ENCODE measurements at regions of chr6 and their contacts with region 1.

Region 1: DNA sequence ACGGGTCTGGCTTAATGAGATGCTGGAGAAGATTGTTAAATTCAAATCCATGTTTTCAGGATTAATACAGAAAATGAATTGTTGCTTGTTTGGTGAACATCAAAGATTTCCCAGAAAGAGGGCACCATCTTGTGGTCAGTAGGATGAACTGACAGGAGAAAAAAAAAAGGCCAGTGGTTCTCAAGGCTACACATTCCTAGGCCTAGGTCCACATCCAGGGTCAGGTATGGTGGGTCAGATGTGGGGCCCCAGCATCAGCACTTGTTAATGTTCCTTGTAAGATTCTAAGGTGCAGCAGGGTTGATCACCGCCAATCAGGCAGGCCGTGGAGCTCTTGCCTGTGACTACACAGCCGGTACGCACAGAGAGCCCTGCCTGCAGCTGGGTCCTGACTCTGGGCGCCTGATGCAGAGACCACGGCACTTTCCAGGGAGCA is 34.0 kb upstream of the FOXO3 start:
- DNase-seq: peak; percentile 6 to 40 (median 33)
- H3K4me3 ChIP-seq: no peak overlapping the region
- H3K4me3 Mint-ChIP-seq: no peak overlapping the region
- H3K27ac ChIP-seq: no peak overlapping the region
- H3K27ac Mint-ChIP-seq: no peak overlapping the region
- H3K4me1 ChIP-seq: no peaks in the 10 kb centered on the region
- H3K4me1 Mint-ChIP-seq: peaks cover 4% of the 10 kb centered on the region
- H3K27me3 ChIP-seq: no peaks in the 10 kb centered on the region
- H3K27me3 Mint-ChIP-seq: peaks cover 0 to 2% (median 0%) of the 10 kb centered on the region in 3 donors
- CTCF ChIP-seq: peak; percentile 75

Region 2: DNA sequence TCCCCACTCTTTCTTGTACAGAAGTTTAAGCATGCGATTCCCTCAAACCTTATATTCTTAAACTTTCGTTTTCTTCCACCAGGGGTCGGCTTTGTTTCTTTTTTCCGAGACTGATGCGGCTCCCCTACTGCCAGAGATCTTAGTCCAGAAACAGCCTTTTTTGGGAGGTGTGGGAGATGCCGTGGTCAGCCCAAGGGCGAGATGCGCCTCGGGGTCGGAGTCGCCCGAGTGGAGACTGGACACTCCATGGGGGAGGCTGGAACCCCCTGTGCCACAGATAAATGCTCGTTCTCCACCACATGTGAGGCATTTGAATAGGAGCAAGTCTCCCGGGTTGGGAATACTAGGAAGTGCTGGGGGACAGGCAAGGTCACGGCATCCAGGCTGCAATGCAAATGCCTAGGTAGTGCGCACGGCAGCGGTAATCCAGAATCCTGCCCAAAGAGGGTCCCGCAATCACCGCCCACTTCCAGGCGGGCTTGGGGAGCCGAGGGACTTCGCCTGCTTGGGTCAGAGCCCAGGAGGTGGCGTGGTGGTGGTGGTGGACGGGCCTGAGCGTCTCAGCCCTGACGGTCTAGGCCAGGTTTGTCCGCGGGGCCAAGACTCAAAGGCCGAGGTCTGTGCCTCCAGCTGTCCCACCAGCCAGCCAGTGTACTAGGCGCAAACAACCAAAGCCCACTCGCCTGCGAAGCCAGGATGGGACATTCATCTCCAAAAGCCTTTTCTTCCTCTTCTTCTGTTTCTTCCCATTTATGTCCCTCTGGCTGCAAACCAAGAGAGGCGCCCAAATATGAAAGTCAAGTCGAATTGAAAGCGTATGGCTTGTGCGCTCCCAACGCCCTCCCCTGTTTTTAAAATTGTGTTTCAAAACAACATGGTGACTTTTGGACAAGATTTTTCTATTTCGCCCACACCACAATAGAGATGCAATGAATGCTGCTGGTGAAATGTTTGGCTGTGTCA is 412.9 kb before region 1 on chr6:
- intact Hi-C with region 1: loop called (anchors 5 to 10 kb)
- DNase-seq: no peak
- H3K4me3 ChIP-seq: peak overlapping the region in 1 of 3 experiments; percentile 76
- H3K4me3 Mint-ChIP-seq: peak overlapping the region; percentile 80 to 99
- H3K27ac ChIP-seq: no peak overlapping the region
- H3K27ac Mint-ChIP-seq: peak overlapping the region in 1 of 7 donors; percentile 3
- H3K4me1 ChIP-seq: peaks cover 41 to 50% of the 10 kb centered on the region in 2 donors
- H3K4me1 Mint-ChIP-seq: peaks cover 49% of the 10 kb centered on the region
- H3K27me3 ChIP-seq: peaks cover 69 to 92% of the 10 kb centered on the region in 2 donors
- H3K27me3 Mint-ChIP-seq: peaks cover 85 to 92% (median 86%) of the 10 kb centered on the region in 3 donors
- CTCF ChIP-seq: peak; percentile 43

Region 3: DNA sequence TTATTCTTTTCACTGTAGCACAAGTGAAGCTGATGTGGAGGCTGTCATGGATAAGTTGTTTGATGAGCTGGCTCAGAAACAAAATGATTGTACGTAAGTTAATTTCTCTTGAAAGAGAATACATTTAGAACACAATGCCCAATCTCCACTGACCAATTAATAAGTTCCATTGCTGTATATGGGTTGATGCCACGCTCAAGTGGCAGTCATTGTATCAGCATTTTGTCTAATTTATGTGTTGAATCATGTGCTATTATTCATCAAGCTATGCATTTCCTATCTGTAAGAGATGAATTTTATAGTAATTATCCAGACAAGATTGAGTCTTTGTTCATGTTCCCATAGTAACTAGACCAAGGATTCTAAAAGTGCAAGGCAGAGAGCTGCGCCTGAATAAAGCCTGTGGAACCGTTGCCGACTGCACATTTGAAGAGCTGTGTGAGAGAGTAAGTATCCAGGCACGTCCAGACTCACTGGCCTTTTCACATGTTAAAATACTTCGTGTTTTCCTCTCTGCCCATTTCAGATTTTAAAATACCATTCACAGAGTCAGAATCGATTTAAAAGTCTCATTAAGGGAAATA is 49.8 kb before region 1 on chr6:
- intact Hi-C with region 1: no loop called
- DNase-seq: no peak
- H3K4me3 ChIP-seq: no peak overlapping the region
- H3K4me3 Mint-ChIP-seq: no peak overlapping the region
- H3K27ac ChIP-seq: no peak overlapping the region
- H3K27ac Mint-ChIP-seq: no peak overlapping the region
- H3K4me1 ChIP-seq: no peaks in the 10 kb centered on the region
- H3K4me1 Mint-ChIP-seq: no peaks in the 10 kb centered on the region
- H3K27me3 ChIP-seq: no peaks in the 10 kb centered on the region
- H3K27me3 Mint-ChIP-seq: peaks cover 0 to 3% (median 0%) of the 10 kb centered on the region in 3 donors
- CTCF ChIP-seq: no peak